ENCODE measurements at regions of chr4 and their contacts with region 1.

Region 1: DNA sequence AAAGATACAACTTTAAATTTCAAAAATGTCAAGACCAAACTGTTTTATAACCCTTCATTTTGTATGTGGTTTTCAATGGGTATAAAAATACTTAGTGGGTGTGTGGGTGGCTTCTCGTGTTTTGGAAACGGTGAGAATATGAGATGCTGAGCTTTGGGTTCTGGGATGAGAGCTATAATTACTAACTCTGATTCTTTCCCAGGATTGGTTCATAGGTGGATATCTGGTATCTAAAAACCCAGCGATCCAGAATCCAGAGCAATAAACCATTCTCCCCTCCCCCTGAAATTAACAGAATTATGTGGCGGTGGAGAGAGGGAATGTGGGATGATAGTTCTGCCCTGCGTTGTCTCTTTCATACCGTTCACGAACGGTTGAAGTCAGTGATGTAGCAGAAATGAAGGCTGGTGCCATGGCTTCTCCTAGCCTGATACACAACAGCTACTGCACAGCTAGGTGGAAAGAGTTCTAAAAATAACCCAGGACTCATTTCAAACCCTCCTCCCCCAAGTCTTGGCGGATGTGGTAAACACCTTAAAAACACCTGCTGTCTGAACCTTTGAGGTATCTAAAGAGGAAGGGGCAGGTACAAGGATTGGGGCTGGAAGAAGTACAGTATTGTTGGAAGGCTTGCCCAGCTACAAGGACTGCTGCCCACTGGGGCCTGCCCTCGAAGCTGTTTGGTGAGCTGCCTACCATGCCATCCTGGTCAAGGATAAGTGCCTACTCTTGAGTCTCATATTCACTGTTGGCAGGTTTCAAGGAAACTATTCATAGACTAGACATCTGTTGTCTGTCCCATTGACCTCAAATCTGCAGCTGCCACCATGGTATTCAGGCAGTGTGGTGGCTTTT is 44.5 kb downstream of the SEPTIN11 start:
- DNase-seq: peak in 13 of 14 experiments; percentile 18 to 91 (median 37)
- ATAC-seq: peak; percentile 81
- H3K4me3 ChIP-seq: peak overlapping the region; percentile 16
- H3K4me3 Mint-ChIP-seq: peak overlapping the region; percentile 80
- H3K27ac ChIP-seq: peak overlapping the region in 1 of 2 donors; percentile 64
- H3K27ac Mint-ChIP-seq: peak overlapping the region; percentile 92
- H3K4me1 ChIP-seq: peaks cover 46% of the 10 kb centered on the region
- H3K4me1 Mint-ChIP-seq: peaks cover 81% of the 10 kb centered on the region
- H3K27me3 ChIP-seq: no peaks in the 10 kb centered on the region
- H3K27me3 Mint-ChIP-seq: no peaks in the 10 kb centered on the region
- CTCF ChIP-seq: no peak

Region 2: DNA sequence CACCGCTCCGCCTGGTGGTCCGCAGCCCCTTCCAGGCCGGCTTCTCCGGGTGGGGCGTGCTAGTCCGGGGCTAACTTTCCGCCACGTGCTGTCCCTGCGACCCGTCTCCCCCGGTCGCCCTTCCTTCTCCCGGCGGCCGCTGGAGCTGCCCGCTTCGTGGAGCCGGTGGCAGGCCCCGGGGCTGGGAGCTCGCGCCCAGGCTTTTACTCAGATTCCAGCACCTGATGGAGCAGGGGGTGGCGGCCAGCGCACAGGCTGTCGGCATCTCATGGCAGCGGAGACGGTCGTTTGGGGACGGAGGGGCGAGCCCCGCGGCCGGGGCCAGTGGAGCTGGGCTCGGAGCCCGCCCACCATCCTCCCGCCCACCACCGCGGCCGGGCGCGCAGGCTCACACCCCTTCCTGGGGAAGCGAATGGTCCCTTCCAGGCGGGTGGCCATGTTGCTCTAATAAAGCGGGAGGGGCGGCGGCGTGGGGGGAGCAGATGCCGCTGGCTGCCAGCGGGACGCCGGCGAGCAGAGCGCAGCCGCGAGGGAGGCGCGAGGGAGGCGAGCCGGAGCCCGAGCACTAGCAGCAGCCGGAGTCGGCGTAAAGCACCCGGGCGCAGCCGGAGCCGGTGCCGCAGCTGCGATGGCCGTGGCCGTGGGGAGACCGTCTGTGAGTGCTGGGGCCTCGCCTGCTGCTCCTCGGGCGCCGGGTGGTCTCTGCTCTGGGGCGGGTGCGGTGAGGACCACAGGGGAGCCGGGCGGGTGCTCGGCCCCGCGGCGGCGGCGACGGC is 44.5 kb before region 1 on chr4 and contains the start of gene SEPTIN11:
- CTCF ChIA-PET with region 1: interaction called, 4 read pairs
- POLR2A ChIA-PET with region 1: interaction called, 12 read pairs
- intact Hi-C with region 1: loop called (anchors 1 to 5 kb)
- DNase-seq: peak; percentile 65 to 93 (median 78)
- ATAC-seq: peak; percentile 79
- H3K4me3 ChIP-seq: peak within 1 kb of the TSS; percentile 75
- H3K4me3 Mint-ChIP-seq: peak within 1 kb of the TSS; percentile 89
- H3K27ac ChIP-seq: no peak within 1 kb of the TSS
- H3K27ac Mint-ChIP-seq: peak within 1 kb of the TSS; percentile 76
- H3K4me1 ChIP-seq: peaks cover 27% of the 10 kb centered on the region
- H3K4me1 Mint-ChIP-seq: peaks cover 21% of the 10 kb centered on the region
- H3K27me3 ChIP-seq: no peaks in the 10 kb centered on the region
- H3K27me3 Mint-ChIP-seq: no peaks in the 10 kb centered on the region
- CTCF ChIP-seq: no peak
- total RNA-seq, gene SEPTIN11: 8.1 to 9.4 TPM

Region 3: GRCh38 chr4:77007358-77008191 is 13.6 kb after region 1 on chr4:
- CTCF ChIA-PET with region 1: interaction called, 7 read pairs
- POLR2A ChIA-PET with region 1: interaction called, 53 read pairs
- intact Hi-C with region 1: loop called in 1 of 2 experiments (anchors 2 kb)
- DNase-seq: peak in 5 of 14 experiments; percentile 22 to 77 (median 43)
- ATAC-seq: peak; percentile 91
- H3K4me3 ChIP-seq: no peak overlapping the region
- H3K4me3 Mint-ChIP-seq: peak overlapping the region; percentile 54
- H3K27ac ChIP-seq: peak overlapping the region; percentile 20 to 43
- H3K27ac Mint-ChIP-seq: peak overlapping the region; percentile 42
- H3K4me1 ChIP-seq: peaks cover 35% of the 10 kb centered on the region
- H3K4me1 Mint-ChIP-seq: peaks cover 84% of the 10 kb centered on the region
- H3K27me3 ChIP-seq: no peaks in the 10 kb centered on the region
- H3K27me3 Mint-ChIP-seq: no peaks in the 10 kb centered on the region
- CTCF ChIP-seq: no peak

Region 4: DNA sequence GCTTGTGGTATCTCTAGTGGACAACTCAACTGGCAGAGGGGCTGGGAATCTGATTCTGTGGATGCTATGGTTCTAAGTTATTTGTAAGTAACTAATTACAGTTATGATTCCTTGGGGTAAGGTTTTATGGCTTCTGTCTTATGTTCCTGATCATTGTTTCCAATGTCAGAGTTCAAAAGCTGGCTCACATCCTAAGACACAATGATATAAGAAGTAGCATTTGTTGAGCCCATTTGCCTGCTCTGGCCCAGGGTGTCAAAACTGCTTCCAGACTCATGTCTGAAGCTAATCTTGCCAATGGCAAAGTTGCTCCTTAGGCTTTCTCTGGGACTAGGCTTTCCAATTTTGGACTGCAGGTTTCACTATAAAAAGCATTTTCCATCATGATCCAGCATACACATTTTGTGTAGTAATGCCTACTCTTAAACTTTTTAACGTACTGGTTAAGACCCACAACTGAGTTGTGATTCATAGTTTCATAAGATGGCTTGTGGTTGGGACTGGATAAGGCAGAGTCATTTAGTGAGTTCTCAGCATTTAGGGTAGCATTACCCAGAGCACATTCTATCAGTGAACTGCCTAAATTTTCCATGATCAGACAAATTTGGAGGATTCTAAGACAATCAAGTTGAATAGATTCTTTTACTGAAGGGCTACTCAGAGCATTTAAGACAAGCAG is 31.8 kb after region 1 on chr4:
- CTCF ChIA-PET with region 1: no interaction called
- POLR2A ChIA-PET with region 1: interaction called, 4 read pairs
- intact Hi-C with region 1: loop called (anchors 5 kb)
- DNase-seq: no peak
- ATAC-seq: no peak
- H3K4me3 ChIP-seq: no peak overlapping the region
- H3K4me3 Mint-ChIP-seq: no peak overlapping the region
- H3K27ac ChIP-seq: no peak overlapping the region
- H3K27ac Mint-ChIP-seq: no peak overlapping the region
- H3K4me1 ChIP-seq: no peaks in the 10 kb centered on the region
- H3K4me1 Mint-ChIP-seq: peaks cover 26% of the 10 kb centered on the region
- H3K27me3 ChIP-seq: no peaks in the 10 kb centered on the region
- H3K27me3 Mint-ChIP-seq: no peaks in the 10 kb centered on the region
- CTCF ChIP-seq: no peak

Region 5: GRCh38 chr4:77141964-77142645 is 148.1 kb after region 1 on chr4:
- CTCF ChIA-PET with region 1: no interaction called
- POLR2A ChIA-PET with region 1: no interaction called
- intact Hi-C with region 1: no loop called
- DNase-seq: peak in 3 of 14 experiments; percentile 30 to 66 (median 42)
- ATAC-seq: no peak
- H3K4me3 ChIP-seq: no peak overlapping the region
- H3K4me3 Mint-ChIP-seq: no peak overlapping the region
- H3K27ac ChIP-seq: no peak overlapping the region
- H3K27ac Mint-ChIP-seq: no peak overlapping the region
- H3K4me1 ChIP-seq: peaks cover 2% of the 10 kb centered on the region
- H3K4me1 Mint-ChIP-seq: peaks cover 18% of the 10 kb centered on the region
- H3K27me3 ChIP-seq: no peaks in the 10 kb centered on the region
- H3K27me3 Mint-ChIP-seq: no peaks in the 10 kb centered on the region
- CTCF ChIP-seq: no peak